ENCODE measurements at regions of chr11 and their contacts with region 1.

Region 1: GRCh38 chr11:36564376-36565030 is 3.3 kb upstream of the RAG1 start:
- H3K4me3 Mint-ChIP-seq: peak overlapping the region; percentile 72
- H3K27ac Mint-ChIP-seq: no peak overlapping the region
- H3K4me1 Mint-ChIP-seq: peaks cover 11% of the 10 kb centered on the region
- H3K27me3 Mint-ChIP-seq: peaks cover 15% of the 10 kb centered on the region

Region 2: GRCh38 chr11:34926101-34926830 is 1638.2 kb before region 1 on chr11:
- intact Hi-C with region 1: no loop called
- H3K4me3 Mint-ChIP-seq: no peak overlapping the region
- H3K27ac Mint-ChIP-seq: no peak overlapping the region
- H3K4me1 Mint-ChIP-seq: peaks cover 33% of the 10 kb centered on the region
- H3K27me3 Mint-ChIP-seq: no peaks in the 10 kb centered on the region

Region 3: GRCh38 chr11:36672813-36673450 is 108.4 kb after region 1 on chr11:
- intact Hi-C with region 1: loop called (anchors 1 kb)
- H3K4me3 Mint-ChIP-seq: no peak overlapping the region
- H3K27ac Mint-ChIP-seq: no peak overlapping the region
- H3K4me1 Mint-ChIP-seq: no peaks in the 10 kb centered on the region
- H3K27me3 Mint-ChIP-seq: no peaks in the 10 kb centered on the region

Measured in dendritic cell treated with granulocyte-macrophage colony-stimulating factor and Interleukin-4, amounts not matched to agents 40 ng/mL and 50 ng/mL, for 4 days (primary cell).